T-cell (primary cell): ENCODE measurements at regions of chr7 and their contacts with region 1.

Region 1: DNA sequence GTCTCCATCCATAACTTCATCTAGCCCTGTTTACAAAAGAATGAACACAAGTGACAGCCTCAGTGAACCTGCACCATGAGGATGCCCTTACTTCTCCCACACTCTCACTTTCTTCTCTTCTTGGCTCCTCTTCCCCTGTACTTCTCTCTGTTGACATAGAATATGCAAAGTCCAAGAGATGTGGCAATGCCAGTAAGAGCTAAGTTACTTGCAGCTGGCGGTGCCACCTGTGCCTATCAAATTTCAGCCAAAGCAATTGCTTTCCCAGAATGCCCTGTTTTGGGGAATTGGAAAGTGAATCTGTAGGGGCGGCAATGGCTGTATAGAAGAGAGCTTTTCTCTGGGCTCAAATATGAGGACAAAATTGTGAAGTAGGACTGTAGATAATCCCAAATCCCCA is 557.8 kb downstream of the AUTS2 start:
- DNase-seq: no peak
- ATAC-seq: no peak
- H3K4me3 ChIP-seq: no peak overlapping the region
- H3K4me3 Mint-ChIP-seq: no peak overlapping the region
- H3K27ac ChIP-seq: no peak overlapping the region
- H3K27ac Mint-ChIP-seq: no peak overlapping the region
- H3K4me1 ChIP-seq: no peaks in the 10 kb centered on the region
- H3K4me1 Mint-ChIP-seq: no peaks in the 10 kb centered on the region
- H3K27me3 ChIP-seq: no peaks in the 10 kb centered on the region
- H3K27me3 Mint-ChIP-seq: no peaks in the 10 kb centered on the region

Region 2: DNA sequence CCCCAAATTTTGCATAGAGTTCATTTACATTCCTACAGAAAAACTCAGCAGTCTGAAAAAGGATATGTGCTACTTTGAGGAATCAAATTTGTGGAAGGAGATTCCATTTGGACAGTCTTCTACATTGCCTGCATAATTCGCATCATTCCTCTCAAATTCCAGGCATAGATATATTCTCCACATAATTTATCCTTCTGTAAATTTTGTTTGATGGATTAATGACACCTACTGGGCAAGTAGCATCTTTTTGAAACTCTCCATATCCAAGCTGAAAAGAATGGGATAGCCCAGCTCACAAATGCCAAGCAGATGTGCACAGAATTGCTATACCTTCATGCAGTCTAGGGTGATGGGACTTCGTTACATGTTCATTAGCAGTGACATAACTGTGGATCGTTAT is 42.5 kb before region 1 on chr7:
- CTCF ChIA-PET with region 1: interaction called in 1 of 2 experiments, 12 read pairs
- POLR2A ChIA-PET with region 1: no interaction called
- DNase-seq: no peak
- ATAC-seq: no peak
- H3K4me3 ChIP-seq: no peak overlapping the region
- H3K4me3 Mint-ChIP-seq: no peak overlapping the region
- H3K27ac ChIP-seq: no peak overlapping the region
- H3K27ac Mint-ChIP-seq: no peak overlapping the region
- H3K4me1 ChIP-seq: no peaks in the 10 kb centered on the region
- H3K4me1 Mint-ChIP-seq: no peaks in the 10 kb centered on the region
- H3K27me3 ChIP-seq: no peaks in the 10 kb centered on the region
- H3K27me3 Mint-ChIP-seq: no peaks in the 10 kb centered on the region

Region 3: DNA sequence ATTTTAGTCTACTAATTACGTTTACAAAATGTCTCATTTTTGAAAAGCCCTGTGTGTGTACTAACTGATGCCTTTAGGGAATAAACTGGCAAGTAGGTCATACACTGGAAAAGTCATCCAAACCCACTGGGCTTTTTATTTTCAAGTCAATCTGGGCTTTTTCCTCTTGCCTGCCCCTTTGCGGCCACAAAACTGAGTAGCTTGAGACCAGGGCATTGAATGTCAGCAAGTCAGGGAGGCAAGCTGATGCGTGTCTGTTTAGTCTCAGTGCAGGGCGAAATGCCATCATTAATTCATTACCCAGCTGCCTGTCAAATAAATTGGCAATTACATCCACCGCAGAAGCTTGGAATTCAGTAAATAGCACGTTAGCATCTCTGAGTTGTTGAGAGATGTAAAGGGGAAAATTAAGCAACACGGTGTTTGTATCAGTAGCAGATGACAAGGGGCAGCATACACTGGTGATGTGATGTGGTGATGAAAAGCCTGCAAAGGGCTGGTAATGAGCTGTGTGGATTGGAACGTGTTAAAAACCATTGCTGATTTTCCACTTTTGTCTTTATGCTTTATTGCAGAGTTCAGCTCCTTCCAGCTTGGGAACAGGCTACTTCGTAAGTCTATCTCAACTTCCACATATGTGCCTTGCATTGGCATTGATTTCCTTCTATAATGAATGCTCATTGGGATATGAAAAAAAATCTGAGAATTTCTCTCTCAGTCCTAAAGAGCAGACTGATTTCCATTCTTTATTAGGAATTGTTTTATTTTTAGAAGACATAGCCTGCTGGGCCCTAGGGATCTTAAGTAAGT is 21.9 kb before region 1 on chr7:
- CTCF ChIA-PET with region 1: no interaction called
- POLR2A ChIA-PET with region 1: no interaction called
- DNase-seq: no peak
- ATAC-seq: no peak
- H3K4me3 ChIP-seq: no peak overlapping the region
- H3K4me3 Mint-ChIP-seq: no peak overlapping the region
- H3K27ac ChIP-seq: no peak overlapping the region
- H3K27ac Mint-ChIP-seq: no peak overlapping the region
- H3K4me1 ChIP-seq: no peaks in the 10 kb centered on the region
- H3K4me1 Mint-ChIP-seq: no peaks in the 10 kb centered on the region
- H3K27me3 ChIP-seq: no peaks in the 10 kb centered on the region
- H3K27me3 Mint-ChIP-seq: no peaks in the 10 kb centered on the region

Region 4: GRCh38 chr7:70183278-70183677 is 27.2 kb after region 1 on chr7:
- CTCF ChIA-PET with region 1: no interaction called
- POLR2A ChIA-PET with region 1: no interaction called
- DNase-seq: no peak
- ATAC-seq: no peak
- H3K4me3 ChIP-seq: no peak overlapping the region
- H3K4me3 Mint-ChIP-seq: no peak overlapping the region
- H3K27ac ChIP-seq: no peak overlapping the region
- H3K27ac Mint-ChIP-seq: no peak overlapping the region
- H3K4me1 ChIP-seq: peaks cover 0 to 5% of the 10 kb centered on the region in 2 experiments
- H3K4me1 Mint-ChIP-seq: peaks cover 5 to 8% (median 7%) of the 10 kb centered on the region in 3 donors
- H3K27me3 ChIP-seq: no peaks in the 10 kb centered on the region
- H3K27me3 Mint-ChIP-seq: peaks cover 3 to 8% of the 10 kb centered on the region in 2 donors

Region 5: DNA sequence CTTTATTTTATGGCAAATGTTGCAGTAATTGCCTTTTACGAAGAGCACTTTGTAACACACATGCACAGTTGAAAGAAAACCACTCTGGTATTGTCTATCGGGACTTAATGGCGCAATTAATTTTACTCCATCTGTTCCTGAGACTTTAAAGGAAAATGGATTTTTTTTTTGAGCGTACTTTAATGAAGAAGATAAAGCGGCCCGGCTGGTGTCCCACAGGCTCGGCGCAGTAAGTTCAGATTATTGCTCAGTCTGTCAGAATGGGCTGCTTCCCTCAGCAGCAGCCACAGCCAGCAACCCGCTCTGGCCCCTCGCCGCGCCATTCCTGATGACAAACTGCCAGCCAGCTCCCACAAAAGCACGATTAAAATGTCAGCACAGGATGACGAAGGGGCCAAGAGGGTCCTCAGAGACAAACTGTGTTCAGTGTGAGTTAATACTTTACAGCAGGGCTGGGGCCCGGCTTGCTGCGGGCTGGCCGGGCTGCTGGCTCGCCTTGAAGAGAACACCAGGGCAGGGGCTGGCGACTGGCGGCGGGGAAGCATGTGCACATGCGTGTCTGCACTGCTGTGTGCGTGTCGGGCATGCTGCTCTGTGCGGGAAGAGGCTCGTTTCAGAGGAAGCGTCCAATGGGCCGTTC is 474.9 kb after region 1 on chr7:
- CTCF ChIA-PET with region 1: no interaction called
- POLR2A ChIA-PET with region 1: no interaction called
- DNase-seq: no peak
- ATAC-seq: no peak
- H3K4me3 ChIP-seq: no peak overlapping the region
- H3K4me3 Mint-ChIP-seq: no peak overlapping the region
- H3K27ac ChIP-seq: no peak overlapping the region
- H3K27ac Mint-ChIP-seq: no peak overlapping the region
- H3K4me1 ChIP-seq: peaks cover 0 to 3% of the 10 kb centered on the region in 2 experiments
- H3K4me1 Mint-ChIP-seq: peaks cover 0 to 1% (median 0%) of the 10 kb centered on the region in 3 donors
- H3K27me3 ChIP-seq: peaks cover 0 to 2% of the 10 kb centered on the region in 2 experiments
- H3K27me3 Mint-ChIP-seq: peaks cover 0 to 4% of the 10 kb centered on the region in 2 donors

Region 6: GRCh38 chr7:71679480-71679879 is 1523.4 kb after region 1 on chr7:
- CTCF ChIA-PET with region 1: no interaction called
- POLR2A ChIA-PET with region 1: no interaction called
- DNase-seq: no peak
- ATAC-seq: no peak
- H3K4me3 ChIP-seq: no peak overlapping the region
- H3K4me3 Mint-ChIP-seq: no peak overlapping the region
- H3K27ac ChIP-seq: no peak overlapping the region
- H3K27ac Mint-ChIP-seq: no peak overlapping the region
- H3K4me1 ChIP-seq: no peaks in the 10 kb centered on the region
- H3K4me1 Mint-ChIP-seq: no peaks in the 10 kb centered on the region
- H3K27me3 ChIP-seq: peaks cover 0 to 9% of the 10 kb centered on the region in 2 experiments
- H3K27me3 Mint-ChIP-seq: no peaks in the 10 kb centered on the region